ENCODE measurements at regions of chr1 and their contacts with region 1.

Region 1: DNA sequence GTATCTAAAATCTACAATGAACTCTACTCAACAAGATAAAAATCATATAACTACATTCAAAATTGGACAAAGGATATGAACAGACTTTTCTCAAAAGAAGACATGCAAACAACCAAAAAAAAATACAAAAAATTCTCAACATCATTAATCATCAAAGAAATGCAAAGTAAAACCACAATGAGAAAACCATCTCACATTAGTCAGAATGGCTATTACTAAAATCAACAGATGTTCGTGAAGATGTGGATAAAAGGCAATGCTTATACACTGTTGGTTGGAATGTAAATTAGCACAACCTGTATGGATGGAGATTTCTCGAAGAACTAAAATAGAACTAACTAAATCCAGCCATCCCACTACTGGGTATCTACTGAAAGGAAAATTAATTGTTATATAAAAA is 1080.8 kb downstream of the AMY1C start:
- DNase-seq: no peak
- ATAC-seq: no peak
- H3K4me3 ChIP-seq: no peak overlapping the region
- H3K27ac ChIP-seq: no peak overlapping the region
- H3K4me1 ChIP-seq: no peaks in the 10 kb centered on the region
- H3K27me3 ChIP-seq: no peaks in the 10 kb centered on the region

Region 2: DNA sequence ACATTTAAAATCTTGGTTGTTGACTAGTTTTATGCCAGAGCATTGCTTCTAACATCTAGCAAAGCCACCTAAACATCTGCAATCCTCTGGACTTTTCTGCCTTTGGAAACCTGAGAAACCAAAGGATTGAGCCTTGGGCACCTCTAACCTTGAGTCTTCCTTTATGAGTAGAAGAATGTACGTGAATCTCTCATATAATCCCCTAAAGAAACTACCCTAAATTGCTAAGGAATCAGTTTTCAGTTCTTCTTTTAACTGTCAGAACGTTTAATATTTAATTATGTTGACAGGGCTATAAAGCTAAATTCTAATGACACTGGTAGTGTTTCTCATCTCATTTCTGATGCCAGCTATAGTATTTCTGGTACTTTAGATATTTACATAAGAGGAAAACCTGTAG is 83.5 kb before region 1 on chr1:
- intact Hi-C with region 1: loop called in 1 of 2 experiments (anchors 5 kb)
- DNase-seq: no peak
- ATAC-seq: no peak
- H3K4me3 ChIP-seq: no peak overlapping the region
- H3K27ac ChIP-seq: no peak overlapping the region
- H3K4me1 ChIP-seq: no peaks in the 10 kb centered on the region
- H3K27me3 ChIP-seq: no peaks in the 10 kb centered on the region

Measured in aorta (tissue), 5 donors.